Activated CD4-positive, alpha-beta T cell treated with anti-CD3 and anti-CD28 coated beads for 36 hours (primary cell): ENCODE measurements at regions of chr9 and their contacts with region 1.

Region 1: DNA sequence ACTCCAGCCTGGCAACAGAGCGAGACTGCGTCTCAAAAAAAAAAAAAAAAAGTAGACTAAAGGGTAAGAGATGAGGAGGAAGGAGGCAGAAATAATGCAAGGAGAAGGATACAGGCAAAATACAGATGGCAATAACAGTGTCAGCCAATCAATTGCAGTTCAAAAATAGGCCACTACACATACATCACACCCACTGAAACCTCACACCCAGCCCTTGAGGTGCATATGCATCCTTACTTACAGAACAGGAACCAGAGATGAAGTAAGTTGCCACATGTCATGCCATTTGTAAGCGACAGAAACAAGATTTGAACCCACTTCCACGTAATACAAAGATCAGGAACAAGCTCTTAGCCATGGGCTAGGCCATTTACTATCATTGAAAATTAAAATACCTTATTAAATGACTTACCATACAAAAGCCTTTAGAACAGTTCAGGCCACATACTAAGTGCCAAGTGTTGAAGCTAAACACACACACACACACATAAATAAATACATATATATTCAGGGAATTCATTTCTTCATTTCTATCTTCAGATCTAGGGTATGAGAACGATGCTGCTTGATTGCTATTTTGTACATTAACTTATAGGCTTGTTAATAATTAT is 98.4 kb downstream of the FNBP1 start:
- DNase-seq: peak; percentile 77
- ATAC-seq: peak; percentile 94
- H3K4me3 Mint-ChIP-seq: peak overlapping the region; percentile 5
- H3K27ac Mint-ChIP-seq: peak overlapping the region; percentile 86
- H3K4me1 Mint-ChIP-seq: peaks cover 64% of the 10 kb centered on the region
- H3K27me3 Mint-ChIP-seq: no peaks in the 10 kb centered on the region

Region 2: GRCh38 chr9:129954868-129955550 is 10.4 kb after region 1 on chr9:
- CTCF ChIA-PET with region 1: interaction called, 13 read pairs
- POLR2A ChIA-PET with region 1: interaction called, 7 read pairs
- intact Hi-C with region 1: loop called in 1 of 2 experiments (anchors 1 kb)
- DNase-seq: no peak
- ATAC-seq: no peak
- H3K4me3 Mint-ChIP-seq: no peak overlapping the region
- H3K27ac Mint-ChIP-seq: peak overlapping the region; percentile 66
- H3K4me1 Mint-ChIP-seq: peaks cover 61% of the 10 kb centered on the region
- H3K27me3 Mint-ChIP-seq: no peaks in the 10 kb centered on the region

Region 3: GRCh38 chr9:130095872-130096271 is 151.3 kb after region 1 on chr9:
- CTCF ChIA-PET with region 1: no interaction called
- POLR2A ChIA-PET with region 1: no interaction called
- intact Hi-C with region 1: loop called in 1 of 2 experiments (anchors 5 kb)
- DNase-seq: peak; percentile 33
- ATAC-seq: peak; percentile 71
- H3K4me3 Mint-ChIP-seq: no peak overlapping the region
- H3K27ac Mint-ChIP-seq: peak overlapping the region; percentile 70
- H3K4me1 Mint-ChIP-seq: peaks cover 21% of the 10 kb centered on the region
- H3K27me3 Mint-ChIP-seq: no peaks in the 10 kb centered on the region